Activated T-helper 2 cell treated with anti-CD3 and anti-CD28 coated beads, Interferon-gamma antibody, Interleukin-2, Interleukin-4, amounts not matched to agents 10 μg/mL and 5 μg/mL and 100 μg/mL, durations not matched to agents 14 hours and 24 hours and 36 hours (primary cell): ENCODE measurements at regions of chr16 and their contacts with region 1.

Region 1: DNA sequence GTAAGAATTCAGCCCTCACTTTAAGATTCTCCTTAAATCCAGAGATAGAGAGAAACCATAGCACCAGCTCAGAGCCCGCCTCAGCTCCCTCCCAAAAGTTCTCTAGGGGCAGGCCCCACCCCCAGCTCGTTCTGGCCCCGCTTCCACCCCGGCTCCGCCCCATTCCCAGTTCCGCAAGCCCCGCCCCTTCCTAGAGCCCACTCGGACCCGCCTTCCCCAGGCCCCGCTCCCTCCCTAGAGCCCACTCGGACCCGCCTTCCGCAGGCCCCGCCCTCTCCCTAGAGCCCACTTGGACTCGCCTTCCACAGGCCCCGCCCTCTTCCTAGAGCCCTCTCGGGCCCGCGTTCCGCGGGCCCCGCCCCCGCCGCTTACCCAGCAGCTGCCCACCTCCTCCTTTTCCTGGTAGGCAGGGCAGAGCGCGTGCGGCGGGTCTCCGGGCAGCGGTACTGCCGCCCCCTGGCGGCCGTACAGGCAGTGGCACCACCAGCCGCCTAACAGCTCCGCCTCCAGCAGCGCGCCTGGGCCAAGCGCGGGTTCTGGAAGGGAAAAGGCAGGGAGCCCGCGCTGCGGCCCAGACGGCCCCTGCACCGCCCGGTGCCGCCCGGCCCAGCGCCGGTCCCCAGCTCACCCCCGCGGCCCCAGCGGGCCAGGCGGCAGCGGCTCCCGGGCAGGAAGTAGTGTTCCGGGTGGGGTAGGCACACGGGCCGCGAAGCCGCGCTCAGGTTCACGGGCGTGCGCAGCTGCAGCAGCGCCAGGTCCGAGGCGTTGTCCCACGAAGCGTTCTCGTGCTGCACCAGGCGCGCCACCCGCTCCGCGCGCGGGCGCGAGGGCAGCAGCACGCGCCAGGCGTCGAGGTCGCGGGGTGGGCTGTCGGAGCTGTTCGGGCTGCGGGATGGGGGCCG is 6.8 kb upstream of the PRSS8 start:
- DNase-seq: peak; percentile 98
- H3K4me3 Mint-ChIP-seq: peak overlapping the region; percentile 70
- H3K27ac Mint-ChIP-seq: peak overlapping the region; percentile 77
- H3K4me1 Mint-ChIP-seq: peaks cover 7% of the 10 kb centered on the region
- H3K27me3 Mint-ChIP-seq: peaks cover 7% of the 10 kb centered on the region

Region 2: DNA sequence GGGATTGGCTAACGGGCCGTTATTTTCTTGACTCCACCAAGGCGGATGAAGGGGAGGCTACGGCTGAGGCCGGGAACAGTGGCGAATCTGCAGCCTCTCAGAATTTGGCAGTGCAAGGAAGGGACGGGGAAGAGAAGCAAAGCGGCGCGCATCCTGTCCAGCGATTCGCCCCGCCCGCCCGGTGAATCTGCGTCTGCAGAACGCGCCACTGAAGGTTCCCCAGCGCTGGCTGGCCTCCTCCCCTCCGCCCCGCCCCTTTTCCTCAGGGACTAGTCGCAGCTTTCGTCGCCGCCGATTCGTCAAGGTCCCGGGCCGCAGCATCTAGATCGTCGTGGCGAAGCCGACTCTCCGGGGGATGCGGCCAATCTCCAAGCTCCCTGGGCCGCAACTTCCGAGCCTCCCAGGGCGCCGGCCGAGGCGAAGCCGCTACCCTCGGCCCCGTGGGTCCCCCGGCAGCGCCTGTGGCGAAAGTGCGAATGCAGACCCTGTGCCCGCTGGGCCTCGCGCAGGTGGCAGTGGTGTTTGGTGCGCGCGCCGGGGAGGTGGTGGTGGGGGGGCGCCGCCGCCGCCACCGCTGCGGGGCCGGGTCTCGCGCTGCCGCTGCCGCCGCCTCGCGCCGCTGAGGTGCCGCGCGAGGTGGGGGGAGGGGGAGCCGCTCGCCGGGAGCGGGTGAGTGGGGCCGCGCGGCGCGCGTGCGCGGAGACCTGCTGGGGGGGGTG is 184.7 kb before region 1 on chr16 and contains the start of gene SETD1A:
- intact Hi-C with region 1: loop called (anchors 1 kb)
- DNase-seq: peak; percentile 94
- H3K4me3 Mint-ChIP-seq: peak within 1 kb of the TSS; percentile 95
- H3K27ac Mint-ChIP-seq: peak within 1 kb of the TSS; percentile 99
- H3K4me1 Mint-ChIP-seq: peaks cover 26% of the 10 kb centered on the region
- H3K27me3 Mint-ChIP-seq: no peaks in the 10 kb centered on the region
- total RNA-seq, gene SETD1A: 28.9 TPM in 2 replicates

Region 3: DNA sequence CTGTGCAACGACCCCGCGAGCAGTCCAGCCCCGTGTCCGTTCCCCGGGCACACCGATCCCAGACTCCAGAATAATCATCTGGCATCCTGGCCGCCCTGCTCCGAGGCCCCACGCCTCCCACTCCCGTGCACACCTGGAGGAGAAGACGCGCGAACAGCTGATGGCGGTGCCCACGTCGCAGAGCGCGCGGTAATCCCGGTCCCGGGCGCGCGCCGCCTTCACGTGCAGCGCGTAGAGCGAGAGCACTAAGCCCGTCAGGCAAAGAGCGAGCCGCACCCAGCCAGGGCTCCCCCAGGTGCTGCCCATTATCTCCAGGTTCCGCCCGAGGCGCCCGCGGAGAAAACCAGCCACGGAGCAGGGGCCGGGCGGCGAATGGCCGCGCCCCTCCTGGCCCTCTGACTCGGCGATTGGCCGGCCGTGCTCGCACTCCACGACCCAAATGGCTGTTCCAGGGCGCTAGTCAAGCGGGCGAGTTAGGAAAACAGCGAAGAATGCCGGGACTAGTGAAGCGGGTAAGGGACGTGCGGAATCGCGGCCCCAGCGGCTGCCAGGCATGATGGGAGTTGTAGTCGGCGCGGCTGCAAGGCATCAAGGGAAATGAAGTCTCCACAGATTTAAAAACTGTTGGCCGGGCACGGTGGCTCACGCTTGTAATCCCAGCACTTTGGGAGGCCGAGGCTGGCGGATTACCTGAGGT is 47.8 kb before region 1 on chr16 and contains the start of gene VKORC1:
- intact Hi-C with region 1: loop called (anchors 2 kb)
- DNase-seq: peak; percentile 85
- H3K4me3 Mint-ChIP-seq: peak within 1 kb of the TSS; percentile 99
- H3K27ac Mint-ChIP-seq: peak within 1 kb of the TSS; percentile 83
- H3K4me1 Mint-ChIP-seq: peaks cover 20% of the 10 kb centered on the region
- H3K27me3 Mint-ChIP-seq: no peaks in the 10 kb centered on the region
- total RNA-seq, gene VKORC1: 54.5 and 60.0 TPM in 2 replicates

Region 4: DNA sequence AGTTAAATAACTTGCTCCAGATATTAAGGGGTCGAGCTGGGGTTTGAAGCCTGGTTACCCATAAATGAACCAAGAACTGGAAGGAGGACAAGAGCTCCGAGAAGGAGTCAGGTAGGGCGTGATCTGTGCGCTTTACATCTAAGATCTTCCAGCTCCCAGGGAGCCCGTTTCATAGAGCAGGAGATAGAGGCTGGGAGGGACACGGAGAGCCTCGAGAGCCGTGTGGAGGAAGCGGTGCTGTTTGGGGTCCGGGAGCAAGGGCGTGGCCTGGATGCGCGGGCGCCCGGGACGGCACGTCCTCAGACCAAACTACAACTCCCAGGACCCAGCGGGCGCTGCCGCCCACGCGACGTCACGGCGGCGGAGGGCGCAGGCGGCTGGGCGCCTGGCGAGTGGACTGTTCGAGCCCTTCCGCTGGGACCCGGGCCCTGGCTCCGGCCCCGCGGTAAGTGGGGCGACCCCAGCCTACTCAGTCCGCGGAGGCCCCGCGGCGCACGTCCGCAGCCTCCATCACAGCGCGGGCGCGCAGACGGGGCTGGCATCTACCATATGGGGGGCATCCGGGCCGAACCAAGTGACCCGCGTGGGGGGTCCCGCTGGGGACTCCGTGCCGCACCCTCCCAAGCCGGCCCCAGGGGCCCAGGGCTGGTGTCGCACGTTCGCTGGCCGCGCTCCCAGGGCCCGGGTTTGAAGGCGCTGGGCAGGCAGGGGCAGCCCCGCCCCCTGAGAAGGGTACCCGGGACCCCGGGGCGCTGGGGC is 34.1 kb before region 1 on chr16 and contains the start of gene BCKDK:
- intact Hi-C with region 1: loop called (anchors 2 kb)
- DNase-seq: peak; percentile 65
- H3K4me3 Mint-ChIP-seq: peak within 1 kb of the TSS; percentile 85
- H3K27ac Mint-ChIP-seq: peak within 1 kb of the TSS; percentile 91
- H3K4me1 Mint-ChIP-seq: peaks cover 18% of the 10 kb centered on the region
- H3K27me3 Mint-ChIP-seq: no peaks in the 10 kb centered on the region
- total RNA-seq, gene BCKDK: 47.5 and 50.0 TPM in 2 replicates

Region 5: DNA sequence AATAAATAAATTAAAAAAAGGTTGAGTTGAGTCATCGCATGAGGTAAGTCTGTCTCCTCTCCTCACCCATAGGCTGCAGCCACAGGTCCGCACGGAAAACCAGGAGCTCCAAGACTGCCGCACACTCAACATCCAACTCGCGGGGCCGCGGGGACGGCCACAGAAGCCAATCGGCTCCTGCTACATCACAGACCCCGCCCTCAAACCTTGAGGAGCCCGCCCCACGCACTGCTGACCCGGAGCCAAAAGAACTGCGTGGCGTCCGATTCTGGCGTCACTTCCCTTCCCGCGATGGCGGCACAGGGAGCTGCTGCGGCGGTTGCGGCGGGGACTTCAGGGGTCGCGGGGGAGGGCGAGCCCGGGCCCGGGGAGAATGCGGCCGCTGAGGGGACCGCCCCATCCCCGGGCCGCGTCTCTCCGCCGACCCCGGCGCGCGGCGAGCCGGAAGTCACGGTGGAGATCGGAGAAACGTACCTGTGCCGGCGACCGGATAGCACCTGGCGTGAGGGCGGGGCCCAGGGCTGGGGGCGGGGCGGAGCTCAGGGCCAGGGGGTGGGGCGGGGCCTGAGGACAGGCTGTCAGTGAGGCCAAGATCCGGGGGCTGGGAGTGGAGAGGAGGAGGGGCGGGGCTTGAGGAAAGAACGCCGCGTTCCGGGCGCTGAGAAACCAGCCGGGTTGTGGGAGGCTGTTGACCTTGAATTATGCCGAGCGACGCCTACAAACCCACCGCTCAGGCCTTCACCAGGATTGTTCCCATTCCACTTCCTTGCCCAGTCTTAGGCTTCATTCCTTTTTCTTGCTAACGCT is 24.8 kb before region 1 on chr16 and contains the start of gene KAT8:
- intact Hi-C with region 1: loop called (anchors 1 kb)
- DNase-seq: peak; percentile 97
- H3K4me3 Mint-ChIP-seq: peak within 1 kb of the TSS; percentile 86
- H3K27ac Mint-ChIP-seq: peak within 1 kb of the TSS; percentile 75
- H3K4me1 Mint-ChIP-seq: peaks cover 16% of the 10 kb centered on the region
- H3K27me3 Mint-ChIP-seq: no peaks in the 10 kb centered on the region
- total RNA-seq, gene KAT8: 60.5 and 61.2 TPM in 2 replicates

Region 6: DNA sequence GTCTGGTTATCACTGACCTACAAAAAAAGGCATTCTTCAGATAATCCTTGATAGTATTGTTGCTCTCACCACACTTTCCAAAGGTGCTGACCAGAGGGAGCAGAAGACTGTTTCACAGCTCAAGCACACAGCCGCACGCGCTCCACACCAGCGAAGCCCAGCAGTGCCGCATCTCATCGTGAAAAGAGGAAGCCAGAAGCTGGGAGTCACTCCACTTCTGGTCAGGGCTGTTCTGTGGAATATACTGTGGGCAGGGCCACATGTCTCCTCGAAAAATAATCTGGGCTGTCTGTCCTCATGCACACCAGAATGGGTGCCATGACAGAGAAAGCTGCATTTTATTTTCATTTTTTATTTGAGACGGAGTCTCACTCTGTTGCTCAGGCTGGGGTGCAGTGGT is 14.8 kb after region 1 on chr16:
- intact Hi-C with region 1: no loop called
- DNase-seq: no peak
- H3K4me3 Mint-ChIP-seq: no peak overlapping the region
- H3K27ac Mint-ChIP-seq: no peak overlapping the region
- H3K4me1 Mint-ChIP-seq: peaks cover 5% of the 10 kb centered on the region
- H3K27me3 Mint-ChIP-seq: peaks cover 11% of the 10 kb centered on the region

Region 7: DNA sequence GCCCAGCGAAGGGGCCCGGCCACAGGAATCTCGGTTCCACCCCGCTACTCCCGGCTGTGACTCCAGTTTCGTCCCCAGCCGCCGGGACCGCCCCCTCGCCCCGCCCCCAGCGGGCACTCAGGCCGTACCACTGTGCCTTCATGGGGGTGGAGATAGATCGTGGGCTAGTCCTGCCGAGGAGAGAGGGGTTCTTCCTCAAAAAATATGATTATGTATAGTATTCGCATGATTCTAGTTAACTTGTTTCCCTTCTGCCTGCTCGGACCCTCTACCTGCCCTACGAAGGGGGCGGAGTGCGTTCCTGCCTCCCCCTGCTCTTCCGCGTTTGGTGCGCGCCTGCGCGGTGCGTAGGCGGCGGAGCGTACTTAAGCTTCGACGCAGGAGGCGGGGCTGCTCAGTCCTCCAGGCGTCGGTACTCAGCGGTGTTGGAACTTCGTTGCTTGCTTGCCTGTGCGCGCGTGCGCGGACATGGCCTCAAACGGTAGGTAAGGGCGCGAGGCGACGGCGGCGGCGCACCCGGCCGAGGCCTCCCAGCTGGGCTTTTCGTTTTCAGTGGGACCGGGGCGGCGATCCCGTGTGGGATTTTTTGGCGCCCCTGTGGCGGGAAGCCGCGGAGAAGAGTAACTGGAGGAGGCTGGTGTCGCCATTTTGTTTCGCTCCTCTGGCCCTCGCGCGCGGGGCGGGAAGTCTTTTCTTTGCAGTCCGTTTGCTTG is 37.5 kb after region 1 on chr16 and contains the start of gene FUS:
- intact Hi-C with region 1: loop called (anchors 1 kb)
- DNase-seq: peak; percentile 88
- H3K4me3 Mint-ChIP-seq: peak within 1 kb of the TSS; percentile 98
- H3K27ac Mint-ChIP-seq: peak within 1 kb of the TSS; percentile 95
- H3K4me1 Mint-ChIP-seq: peaks cover 38% of the 10 kb centered on the region
- H3K27me3 Mint-ChIP-seq: no peaks in the 10 kb centered on the region
- total RNA-seq, gene FUS: 874 and 904 TPM in 2 replicates